Naive thymus-derived CD4-positive, alpha-beta T cell (primary cell): ENCODE measurements at regions of chr5 and their contacts with region 1.

Region 1: GRCh38 chr5:59099270-59099994 is 516.6 kb downstream of the RAB3C start:
- DNase-seq: peak in 2 of 9 donors; percentile 2 to 39
- ATAC-seq: peak; percentile 90
- H3K4me3 ChIP-seq: no peak overlapping the region
- H3K4me3 Mint-ChIP-seq: peak overlapping the region in 4 of 10 donors; percentile 1 to 66 (median 4)
- H3K27ac ChIP-seq: no peak overlapping the region
- H3K27ac Mint-ChIP-seq: peak overlapping the region in 8 of 9 donors; percentile 0 to 87 (median 22)
- H3K4me1 ChIP-seq: peaks cover 10 to 14% of the 10 kb centered on the region in 2 donors
- H3K4me1 Mint-ChIP-seq: peaks cover 11 to 80% (median 22%) of the 10 kb centered on the region in 7 donors
- H3K27me3 ChIP-seq: no peaks in the 10 kb centered on the region
- H3K27me3 Mint-ChIP-seq: no peaks in the 10 kb centered on the region

Region 2: GRCh38 chr5:59174248-59174844 is 74.9 kb after region 1 on chr5:
- CTCF ChIA-PET with region 1: interaction called, 4 read pairs
- POLR2A ChIA-PET with region 1: interaction called, 4 read pairs
- intact Hi-C with region 1: loop called in 1 of 2 experiments (anchors 1 kb)
- DNase-seq: peak in 7 of 9 donors; percentile 35 to 67 (median 54)
- ATAC-seq: peak; percentile 86
- H3K4me3 ChIP-seq: no peak overlapping the region
- H3K4me3 Mint-ChIP-seq: no peak overlapping the region
- H3K27ac ChIP-seq: no peak overlapping the region
- H3K27ac Mint-ChIP-seq: peak overlapping the region in 1 of 9 donors; percentile 5
- H3K4me1 ChIP-seq: no peaks in the 10 kb centered on the region
- H3K4me1 Mint-ChIP-seq: peaks cover 0 to 48% (median 5%) of the 10 kb centered on the region in 7 donors
- H3K27me3 ChIP-seq: no peaks in the 10 kb centered on the region
- H3K27me3 Mint-ChIP-seq: no peaks in the 10 kb centered on the region

Region 3: DNA sequence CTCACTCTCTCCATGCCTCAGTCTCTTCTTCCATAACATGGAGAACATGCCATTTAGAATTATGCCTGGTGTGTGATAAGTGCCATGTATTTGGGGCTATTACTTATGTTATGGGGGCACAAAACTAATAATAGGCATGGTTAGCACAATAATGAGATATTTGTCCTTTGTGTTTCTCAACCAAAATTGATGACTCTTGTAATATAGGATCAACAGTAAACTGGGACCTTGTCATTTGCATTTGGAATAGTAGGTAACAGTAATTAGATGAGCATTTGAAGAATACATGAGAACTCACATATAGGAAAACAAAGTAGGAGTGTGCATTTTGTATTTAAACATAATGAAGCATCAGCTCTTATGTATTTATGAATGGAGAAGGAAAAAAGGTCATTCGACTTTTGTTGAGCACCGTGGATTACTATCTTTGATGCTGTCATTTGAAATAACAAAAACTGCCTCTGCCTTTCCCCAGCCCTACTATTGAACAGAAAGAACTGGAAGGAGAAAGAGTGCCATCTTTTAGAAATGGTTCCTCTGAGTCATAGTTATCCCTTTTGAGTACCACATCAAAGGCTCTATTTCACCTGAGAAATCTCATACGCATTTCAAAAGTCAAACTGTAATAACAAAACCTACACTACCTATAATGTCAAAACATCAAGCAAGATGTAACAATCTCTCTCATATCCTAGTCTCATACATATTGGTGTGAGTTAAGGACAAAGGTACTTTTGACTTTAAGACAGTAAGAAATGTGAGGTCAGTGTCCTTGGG is 138.9 kb after region 1 on chr5:
- CTCF ChIA-PET with region 1: no interaction called
- POLR2A ChIA-PET with region 1: no interaction called
- intact Hi-C with region 1: no loop called
- DNase-seq: peak in 6 of 9 donors; percentile 9 to 53 (median 36)
- ATAC-seq: peak; percentile 63
- H3K4me3 ChIP-seq: no peak overlapping the region
- H3K4me3 Mint-ChIP-seq: peak overlapping the region in 1 of 10 donors; percentile 32
- H3K27ac ChIP-seq: no peak overlapping the region
- H3K27ac Mint-ChIP-seq: peak overlapping the region in 3 of 9 donors; percentile 23 to 81 (median 42)
- H3K4me1 ChIP-seq: no peaks in the 10 kb centered on the region
- H3K4me1 Mint-ChIP-seq: peaks cover 0 to 13% (median 9%) of the 10 kb centered on the region in 7 donors
- H3K27me3 ChIP-seq: no peaks in the 10 kb centered on the region
- H3K27me3 Mint-ChIP-seq: peaks cover 0 to 58% (median 4%) of the 10 kb centered on the region in 5 donors

Region 4: GRCh38 chr5:59287320-59287719 is 187.9 kb after region 1 on chr5:
- CTCF ChIA-PET with region 1: no interaction called
- POLR2A ChIA-PET with region 1: no interaction called
- intact Hi-C with region 1: no loop called
- DNase-seq: no peak
- ATAC-seq: no peak
- H3K4me3 ChIP-seq: no peak overlapping the region
- H3K4me3 Mint-ChIP-seq: no peak overlapping the region
- H3K27ac ChIP-seq: no peak overlapping the region
- H3K27ac Mint-ChIP-seq: no peak overlapping the region
- H3K4me1 ChIP-seq: no peaks in the 10 kb centered on the region
- H3K4me1 Mint-ChIP-seq: no peaks in the 10 kb centered on the region
- H3K27me3 ChIP-seq: no peaks in the 10 kb centered on the region
- H3K27me3 Mint-ChIP-seq: peaks cover 4 to 20% (median 6%) of the 10 kb centered on the region in 5 donors